Activated naive CD4-positive, alpha-beta T cell treated with anti-CD3 and anti-CD28 coated beads for 36 hours (primary cell): ENCODE measurements at regions of chr10 and their contacts with region 1.

Region 1: DNA sequence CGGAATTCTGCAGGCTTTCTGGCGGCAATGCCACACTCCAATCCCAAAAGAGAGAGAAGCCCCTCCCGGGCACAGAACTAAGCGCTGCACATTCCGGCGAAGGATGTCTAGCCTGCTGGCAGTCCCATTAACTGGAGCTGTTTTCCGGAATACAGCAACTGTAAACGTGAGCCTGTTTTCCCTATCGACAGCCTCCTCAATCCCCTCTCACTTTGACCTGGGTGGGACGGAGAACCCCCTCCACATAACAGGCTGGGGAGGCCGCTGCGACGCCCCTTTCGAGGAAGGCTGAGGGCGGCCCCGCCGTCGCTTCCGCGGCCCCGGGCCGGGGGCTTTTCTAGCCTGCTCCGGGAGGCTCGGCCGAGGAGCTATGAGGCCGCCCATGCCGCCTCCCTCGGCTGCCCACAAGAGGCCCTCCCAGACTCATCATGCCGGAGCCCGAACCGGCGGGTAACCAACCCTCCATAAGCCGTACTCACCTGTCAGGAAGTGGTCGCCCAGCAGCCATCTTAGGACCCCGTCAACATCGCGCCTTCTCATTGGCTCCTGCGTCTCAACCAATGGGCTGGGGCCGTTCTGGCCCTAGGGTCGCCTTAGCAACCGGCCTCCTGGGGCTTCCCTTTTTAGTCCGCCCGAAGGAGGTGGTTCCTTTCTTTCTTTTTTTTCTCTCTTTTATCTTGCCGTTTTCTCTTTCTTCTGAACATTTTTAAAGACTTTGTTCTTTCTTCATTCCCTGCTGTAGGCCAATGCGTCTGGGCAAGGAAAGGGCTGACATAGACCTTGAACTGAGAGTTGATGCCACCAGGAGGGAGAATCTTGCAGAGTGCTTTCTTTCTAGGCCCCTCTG is at the start of gene FAM204A:
- DNase-seq: peak; percentile 98
- H3K4me3 Mint-ChIP-seq: peak within 1 kb of the TSS; percentile 95
- H3K27ac Mint-ChIP-seq: peak within 1 kb of the TSS; percentile 86
- H3K4me1 Mint-ChIP-seq: peaks cover 41% of the 10 kb centered on the region
- H3K27me3 Mint-ChIP-seq: no peaks in the 10 kb centered on the region
- total RNA-seq, gene FAM204A: 60.5 to 67.1 TPM

Region 2: DNA sequence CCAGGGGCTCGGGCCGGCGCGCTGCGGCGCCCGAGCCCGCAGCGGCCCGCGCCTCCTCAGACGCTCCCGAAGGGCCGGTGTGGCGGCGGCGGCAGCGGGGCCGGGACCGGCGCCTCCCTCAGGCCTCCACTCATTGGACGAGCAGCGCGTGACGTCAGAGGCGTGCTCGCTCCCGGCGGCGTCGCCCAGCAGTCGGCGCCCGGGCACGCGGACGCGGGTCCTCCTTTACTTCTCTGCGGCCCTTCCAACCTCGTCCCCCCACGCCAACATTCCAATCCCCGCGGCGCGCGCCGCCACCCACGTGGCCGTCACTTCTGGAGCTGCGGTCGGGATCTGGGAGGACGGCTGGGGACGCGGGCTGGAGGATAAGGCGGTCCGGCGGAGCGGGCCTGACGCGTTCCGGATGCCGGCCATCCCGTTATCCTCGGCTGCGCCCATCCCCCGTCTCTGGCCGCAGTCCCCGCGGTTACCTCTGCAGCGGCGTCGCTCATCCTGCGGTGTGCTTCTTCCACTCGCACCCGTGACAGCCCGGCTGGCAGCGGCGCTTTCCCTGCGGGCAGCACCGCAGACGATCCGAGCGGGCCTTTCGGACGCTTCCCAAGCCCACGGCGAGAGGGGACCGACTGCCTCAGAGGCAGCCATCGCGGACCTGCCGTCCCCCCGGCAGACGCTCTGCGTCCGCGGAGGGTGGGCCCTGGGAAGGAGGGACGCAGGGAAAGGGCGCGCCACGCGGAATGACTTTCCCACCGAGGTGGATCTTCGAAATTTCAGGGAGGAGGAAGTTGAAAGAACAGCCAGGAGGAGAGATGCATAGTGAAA is 966.4 kb before region 1 on chr10 and contains the start of gene PDZD8:
- CTCF ChIA-PET with region 1: no interaction called
- intact Hi-C with region 1: loop called (anchors 1 kb)
- DNase-seq: peak; percentile 85
- H3K4me3 Mint-ChIP-seq: peak within 1 kb of the TSS; percentile 94
- H3K27ac Mint-ChIP-seq: peak within 1 kb of the TSS; percentile 68
- H3K4me1 Mint-ChIP-seq: peaks cover 19% of the 10 kb centered on the region
- H3K27me3 Mint-ChIP-seq: peaks cover 18% of the 10 kb centered on the region
- total RNA-seq, gene PDZD8: 13.6 to 15.8 TPM

Region 3: GRCh38 chr10:117653170-117653515 is 688.9 kb before region 1 on chr10:
- CTCF ChIA-PET with region 1: no interaction called
- intact Hi-C with region 1: loop called (anchors 5 kb)
- DNase-seq: peak; percentile 65
- H3K4me3 Mint-ChIP-seq: no peak overlapping the region
- H3K27ac Mint-ChIP-seq: no peak overlapping the region
- H3K4me1 Mint-ChIP-seq: peaks cover 25% of the 10 kb centered on the region
- H3K27me3 Mint-ChIP-seq: peaks cover 26% of the 10 kb centered on the region

Region 4: DNA sequence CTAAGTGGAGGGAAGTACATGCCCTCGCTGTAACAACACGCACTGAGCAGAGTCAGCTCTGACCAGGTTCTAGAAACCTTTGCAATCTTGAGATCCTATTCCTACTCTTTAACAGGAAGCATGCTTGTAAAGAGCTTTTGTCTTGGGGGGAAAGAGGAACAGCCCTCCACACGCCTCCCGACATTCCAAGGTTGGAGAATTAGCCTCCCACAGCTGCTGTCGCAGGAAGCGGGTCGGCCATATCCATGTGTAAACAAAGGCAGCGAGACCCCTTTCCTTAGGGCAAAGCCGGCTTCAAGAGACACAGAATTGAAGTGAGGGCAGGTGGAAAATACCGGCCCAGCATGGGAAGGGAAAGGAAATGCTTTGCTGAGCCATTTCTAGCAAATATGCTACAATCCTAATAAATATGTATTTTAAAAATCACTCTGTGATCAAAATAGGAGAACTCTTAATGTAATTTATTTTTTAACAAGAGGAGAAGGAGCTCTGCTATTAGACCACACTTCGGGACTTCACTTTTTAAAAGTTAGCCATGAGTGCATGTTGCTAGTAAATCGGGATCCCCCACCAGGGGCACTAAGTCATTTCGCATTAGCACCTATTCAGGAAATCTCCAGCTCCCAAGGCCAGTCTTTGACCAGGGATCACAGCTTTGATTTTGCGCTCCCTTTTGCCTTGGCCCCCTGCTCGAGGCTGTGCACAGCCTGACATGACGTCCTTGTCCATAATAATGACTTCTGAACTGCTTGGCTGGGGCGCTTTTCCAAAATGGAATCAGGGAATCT is 55.8 kb before region 1 on chr10:
- CTCF ChIA-PET with region 1: no interaction called
- intact Hi-C with region 1: no loop called
- DNase-seq: no peak
- H3K4me3 Mint-ChIP-seq: no peak overlapping the region
- H3K27ac Mint-ChIP-seq: no peak overlapping the region
- H3K4me1 Mint-ChIP-seq: no peaks in the 10 kb centered on the region
- H3K27me3 Mint-ChIP-seq: peaks cover 19% of the 10 kb centered on the region

Region 5: DNA sequence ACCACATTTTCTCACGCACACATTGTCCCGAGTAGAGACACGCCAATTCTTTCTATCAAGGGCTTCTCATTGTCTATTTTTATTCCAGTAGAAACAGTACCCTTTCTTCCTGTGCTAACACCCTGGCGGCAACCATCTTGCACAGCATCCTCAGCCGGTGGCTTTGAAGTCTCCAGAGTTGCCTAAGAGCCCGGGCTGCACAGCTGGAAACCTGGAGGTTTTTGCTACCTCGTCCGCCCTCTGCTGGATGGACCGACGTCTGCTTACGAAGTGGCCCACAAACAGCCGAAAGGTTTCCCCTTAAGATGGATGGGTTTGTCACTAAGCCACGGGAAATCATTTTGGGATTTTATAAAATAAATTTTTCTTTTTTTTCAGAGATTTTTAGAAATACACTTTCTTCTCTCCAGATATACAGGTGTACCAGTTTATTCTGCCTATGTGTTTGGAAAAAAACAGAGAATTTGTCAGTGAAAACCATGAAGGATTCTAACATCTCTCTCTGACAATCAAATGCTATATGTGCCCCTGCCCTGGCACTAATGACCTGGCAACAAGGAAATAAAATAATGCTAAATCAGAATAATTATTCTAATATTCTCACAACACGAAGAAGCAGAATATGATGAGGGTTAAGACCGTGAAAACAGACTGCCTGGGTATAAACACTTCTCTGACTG is 81.9 kb after region 1 on chr10:
- CTCF ChIA-PET with region 1: interaction called, 4 read pairs
- intact Hi-C with region 1: loop called (anchors 1 kb)
- DNase-seq: peak; percentile 87
- H3K4me3 Mint-ChIP-seq: no peak overlapping the region
- H3K27ac Mint-ChIP-seq: no peak overlapping the region
- H3K4me1 Mint-ChIP-seq: peaks cover 4% of the 10 kb centered on the region
- H3K27me3 Mint-ChIP-seq: peaks cover 9% of the 10 kb centered on the region

Region 6: DNA sequence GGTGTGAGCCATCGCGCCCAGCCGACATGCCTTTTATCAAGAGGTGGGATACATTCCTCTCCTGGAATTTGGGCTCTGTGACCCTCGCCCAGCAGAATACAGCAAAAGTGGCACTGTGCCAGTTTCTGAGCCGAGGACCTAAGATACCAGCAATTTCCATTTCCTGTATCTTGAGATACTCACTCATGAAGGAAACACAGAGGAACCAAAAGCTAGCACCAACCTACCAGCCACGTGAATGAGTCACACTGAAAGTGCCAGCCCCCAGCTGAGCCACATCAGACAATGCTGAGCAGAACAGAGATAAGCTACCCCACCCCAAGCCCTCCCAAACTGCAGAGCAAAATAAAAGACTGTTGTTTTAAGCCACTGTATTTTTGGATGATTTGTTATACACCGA is 356.4 kb after region 1 on chr10:
- CTCF ChIA-PET with region 1: no interaction called
- intact Hi-C with region 1: loop called (anchors 5 kb)
- DNase-seq: peak; percentile 90
- H3K4me3 Mint-ChIP-seq: no peak overlapping the region
- H3K27ac Mint-ChIP-seq: peak overlapping the region; percentile 32
- H3K4me1 Mint-ChIP-seq: peaks cover 49% of the 10 kb centered on the region
- H3K27me3 Mint-ChIP-seq: no peaks in the 10 kb centered on the region